Cardiac septum (tissue), 1 donor: ENCODE measurements at regions of chr1 and their contacts with region 1.

Region 1: DNA sequence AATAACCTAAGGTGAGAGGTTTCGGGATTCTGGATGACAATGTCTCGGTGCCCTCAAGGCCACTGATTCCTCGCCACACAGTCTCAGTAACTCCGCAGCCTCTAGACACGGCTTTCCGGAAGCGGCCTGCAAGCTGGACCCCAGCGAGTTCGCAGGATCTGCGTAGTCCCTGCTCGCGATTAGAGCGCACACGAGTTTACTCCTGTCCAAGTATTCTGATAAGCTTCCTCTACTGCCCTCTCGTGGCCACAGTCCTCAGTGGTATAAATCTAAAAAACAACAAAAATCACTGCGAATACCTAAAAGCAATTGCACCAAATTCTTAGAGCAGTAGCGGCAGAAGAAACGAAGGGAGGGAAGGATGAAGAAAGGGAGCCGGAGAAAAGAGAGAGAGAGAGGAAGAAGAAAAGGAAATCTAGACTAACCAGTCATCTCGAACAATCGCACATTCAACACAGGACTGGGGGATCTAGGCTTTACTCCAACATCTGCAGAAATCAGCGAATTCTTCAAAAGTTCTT is 1.1 kb upstream of the PLXNA2 start:
- DNase-seq: peak; percentile 90

Region 2: DNA sequence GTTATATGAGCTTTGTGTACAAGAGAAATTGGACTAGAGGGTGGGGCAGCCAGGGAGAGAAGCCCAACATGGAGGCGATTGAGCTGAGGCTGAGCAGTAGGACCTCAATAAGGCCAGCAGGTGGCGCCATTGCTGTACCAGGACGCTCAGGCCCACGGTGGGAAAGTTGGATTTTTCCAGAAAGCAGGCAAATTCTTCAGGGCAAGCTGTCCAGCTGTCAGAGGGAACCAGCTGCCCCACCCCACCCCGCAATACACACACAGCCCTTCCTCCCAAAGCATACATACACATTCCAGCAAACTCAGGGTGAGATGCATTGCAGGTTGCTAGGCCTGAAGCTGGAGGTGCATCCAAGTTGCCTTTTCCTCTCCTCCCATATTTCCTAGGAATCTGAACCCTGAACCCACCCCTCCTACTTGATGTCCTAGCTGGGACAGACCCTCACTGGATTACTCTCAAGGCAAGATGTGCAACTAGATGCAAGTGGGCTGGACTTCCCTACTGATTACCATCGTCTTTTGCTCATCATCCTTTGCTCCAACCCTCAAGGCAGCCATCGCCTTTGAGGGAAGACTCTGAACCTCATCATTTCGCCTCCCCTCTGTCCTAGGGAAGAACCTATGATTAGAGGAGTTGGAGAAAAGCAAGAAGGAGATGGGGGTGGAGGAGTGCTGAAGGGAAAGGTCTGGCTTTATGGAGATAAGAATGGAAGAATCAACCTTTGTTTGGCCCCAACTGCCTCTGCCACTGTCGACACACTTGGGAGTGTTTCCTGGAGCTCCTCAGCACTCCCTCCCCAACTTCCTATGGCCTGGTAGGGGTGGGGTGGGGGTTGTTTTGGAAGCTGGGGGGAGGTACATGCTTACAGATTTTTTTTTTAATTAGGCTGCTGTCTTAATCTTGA is 359.9 kb before region 1 on chr1:
- intact Hi-C with region 1: loop called (anchors 10 kb)
- DNase-seq: peak; percentile 93

Region 3: GRCh38 chr1:208029381-208030287 is 215.6 kb before region 1 on chr1:
- intact Hi-C with region 1: loop called (anchors 2 kb)
- DNase-seq: peak; percentile 63

Region 4: DNA sequence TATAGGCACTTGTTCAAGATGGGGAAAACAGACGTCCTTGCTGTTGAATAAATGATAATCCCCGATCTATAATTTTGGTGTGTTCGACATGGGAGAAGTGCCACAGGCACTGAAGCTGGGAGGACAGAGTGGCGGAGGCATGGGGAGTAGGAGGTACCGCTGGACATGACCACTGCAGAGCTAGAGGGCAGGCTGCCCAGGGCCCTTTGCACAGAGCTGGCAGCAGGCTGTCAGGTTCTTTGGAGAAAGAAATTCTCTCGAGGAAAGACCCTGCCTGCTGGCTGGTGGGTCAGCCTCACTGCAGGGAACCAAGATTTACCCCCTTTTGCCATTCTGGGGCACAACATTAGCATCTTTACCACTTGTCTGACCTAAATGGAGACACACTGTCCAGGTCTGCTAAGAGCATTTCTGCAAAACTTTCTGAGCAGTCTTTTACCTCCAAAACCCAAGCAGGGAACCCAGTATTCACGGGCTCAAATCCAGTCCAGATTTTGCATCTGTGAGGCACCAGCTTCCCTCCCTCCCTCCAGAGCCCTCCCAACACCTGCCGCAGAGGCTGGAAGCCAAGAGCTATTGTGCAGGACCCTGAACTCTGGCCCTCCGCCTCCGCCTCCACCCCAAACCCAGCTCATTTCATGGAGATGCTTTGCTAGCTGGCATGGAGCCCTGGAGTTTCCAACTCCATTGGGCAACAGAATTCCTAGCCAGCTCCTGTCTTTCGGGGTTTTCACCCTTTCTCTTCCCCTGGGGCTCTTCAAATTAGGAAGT is 143.4 kb before region 1 on chr1:
- intact Hi-C with region 1: loop called (anchors 5 kb)
- DNase-seq: peak; percentile 74

Region 5: DNA sequence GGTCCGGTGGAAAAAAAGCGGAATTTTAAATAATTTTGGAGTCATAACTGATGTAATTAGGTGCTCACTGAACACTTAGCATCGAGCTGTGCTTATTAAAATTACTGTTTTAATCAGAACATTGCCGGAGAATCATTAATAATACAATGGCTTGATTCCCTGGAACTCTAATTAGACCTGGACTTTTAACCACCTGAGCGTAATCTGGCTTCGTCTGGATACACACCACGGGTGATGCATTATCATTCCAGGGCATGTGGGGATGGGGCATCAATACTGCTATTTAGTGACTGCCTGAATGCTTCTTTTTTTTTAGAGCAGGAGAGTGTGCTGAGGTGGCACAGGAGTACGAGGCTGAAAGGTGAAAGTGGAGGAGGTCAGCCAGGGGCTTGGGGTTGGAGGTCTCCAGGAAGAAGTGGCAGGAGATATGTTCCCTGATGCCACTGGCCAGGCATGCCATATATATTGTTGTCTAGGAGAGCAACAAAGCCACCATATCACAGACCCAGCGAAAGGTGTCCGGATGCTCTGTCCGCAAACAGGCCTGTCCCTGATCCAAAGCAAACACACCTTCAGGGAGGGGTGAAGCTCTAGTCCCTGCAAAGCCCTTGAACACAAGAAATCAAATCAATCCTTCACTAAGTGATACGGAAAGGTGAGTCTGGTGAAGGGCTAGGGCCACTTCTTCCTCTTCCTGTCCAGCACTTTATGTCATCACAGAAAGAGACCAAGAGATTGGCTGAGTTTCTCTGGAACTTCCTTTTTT is 126.2 kb before region 1 on chr1:
- intact Hi-C with region 1: no loop called
- DNase-seq: no peak

Region 6: GRCh38 chr1:208132287-208132883 is 112.9 kb before region 1 on chr1:
- intact Hi-C with region 1: loop called (anchors 1 kb)
- DNase-seq: peak; percentile 87

Region 7: GRCh38 chr1:208219659-208220282 is 25.5 kb before region 1 on chr1:
- intact Hi-C with region 1: loop called (anchors 2 kb)
- DNase-seq: peak; percentile 89